AG04450 (cell line): ENCODE measurements at regions of chr3 and their contacts with region 1.

Region 1: GRCh38 chr3:49339945-49340800 is at the start of gene USP4:
- DNase-seq: peak; percentile 66
- H3K4me3 ChIP-seq: peak within 1 kb of the TSS; percentile 68
- H3K27ac ChIP-seq: peak within 1 kb of the TSS; percentile 95
- H3K27me3 ChIP-seq: no peaks in the 10 kb centered on the region
- CTCF ChIP-seq: peak; percentile 61
- polyA plus RNA-seq, gene USP4: 78.4 and 80.4 TPM in 2 replicates

Region 2: GRCh38 chr3:49053543-49053942 is 286.6 kb before region 1 on chr3:
- CTCF ChIA-PET with region 1: no interaction called
- POLR2A ChIA-PET with region 1: no interaction called
- DNase-seq: no peak
- H3K4me3 ChIP-seq: no peak overlapping the region
- H3K27ac ChIP-seq: no peak overlapping the region
- H3K27me3 ChIP-seq: no peaks in the 10 kb centered on the region
- CTCF ChIP-seq: no peak

Region 3: DNA sequence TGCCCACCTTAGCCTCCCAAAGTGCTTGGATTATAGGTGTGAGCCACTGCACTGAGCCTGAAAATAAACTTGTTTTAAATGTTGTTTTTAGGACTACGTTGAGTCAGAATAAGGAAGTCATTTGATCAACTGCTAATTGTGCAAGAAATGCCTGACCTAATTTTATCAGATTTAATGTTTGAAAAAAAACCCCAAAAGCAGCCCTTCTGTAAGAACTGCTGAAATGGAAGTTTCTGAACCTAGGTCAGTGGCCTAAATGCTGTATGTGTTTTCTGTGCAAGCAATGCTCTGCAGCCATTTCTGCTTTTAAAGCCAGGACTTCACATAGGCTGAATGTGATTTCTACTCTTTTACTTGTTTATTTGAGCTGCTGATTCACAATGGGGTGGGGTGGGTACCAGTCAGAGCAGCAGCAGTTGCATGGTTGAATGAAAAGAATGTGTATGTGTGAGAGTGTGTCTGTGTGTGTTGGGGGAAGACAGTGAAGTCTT is 11.4 kb after region 1 on chr3:
- CTCF ChIA-PET with region 1: interaction called, 8 read pairs
- POLR2A ChIA-PET with region 1: interaction called, 21 read pairs
- DNase-seq: peak; percentile 75
- H3K4me3 ChIP-seq: no peak overlapping the region
- H3K27ac ChIP-seq: peak overlapping the region; percentile 87
- H3K27me3 ChIP-seq: no peaks in the 10 kb centered on the region
- CTCF ChIP-seq: no peak

Region 4: DNA sequence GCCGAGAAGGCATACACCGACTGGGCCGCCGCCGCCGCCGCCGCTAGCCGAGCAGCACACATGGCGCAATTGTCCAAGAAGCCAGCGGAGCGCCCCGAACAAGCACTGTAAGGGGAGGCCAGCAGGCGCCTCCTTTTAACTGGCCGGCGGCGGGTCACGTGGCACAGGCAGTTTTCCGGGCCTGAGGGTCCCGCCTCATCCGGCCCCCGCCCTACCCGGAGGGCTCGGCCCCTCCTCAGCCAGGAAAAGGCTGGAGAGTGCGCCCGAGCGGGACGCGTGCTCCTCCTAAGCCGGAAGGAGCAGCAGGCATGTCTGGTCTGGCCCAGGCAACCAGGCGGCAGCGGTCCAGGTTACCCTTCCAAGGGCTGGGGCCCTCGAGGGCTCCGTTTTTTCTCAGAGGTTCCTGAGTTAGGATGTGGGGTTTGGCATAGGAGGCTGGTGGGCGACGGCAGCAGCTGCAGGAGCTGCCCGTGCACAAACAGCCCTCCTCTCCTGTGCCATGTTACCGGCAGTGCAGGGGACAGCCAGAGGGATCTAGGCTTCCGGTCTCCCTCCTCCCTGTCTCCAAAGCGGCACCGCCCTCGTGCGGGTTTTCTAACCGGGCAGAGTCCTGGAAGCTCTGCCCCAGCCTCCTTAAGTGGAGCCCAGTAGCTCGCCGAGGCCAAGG is 18.2 kb after region 1 on chr3 and contains the start of gene GPX1:
- CTCF ChIA-PET with region 1: interaction called, 4 read pairs
- POLR2A ChIA-PET with region 1: interaction called, 21 read pairs
- DNase-seq: peak; percentile 90
- H3K4me3 ChIP-seq: peak within 1 kb of the TSS; percentile 71
- H3K27ac ChIP-seq: peak within 1 kb of the TSS; percentile 93
- H3K27me3 ChIP-seq: no peaks in the 10 kb centered on the region
- CTCF ChIP-seq: no peak
- polyA plus RNA-seq, gene GPX1: 434 and 693 TPM in 2 replicates

Region 5: DNA sequence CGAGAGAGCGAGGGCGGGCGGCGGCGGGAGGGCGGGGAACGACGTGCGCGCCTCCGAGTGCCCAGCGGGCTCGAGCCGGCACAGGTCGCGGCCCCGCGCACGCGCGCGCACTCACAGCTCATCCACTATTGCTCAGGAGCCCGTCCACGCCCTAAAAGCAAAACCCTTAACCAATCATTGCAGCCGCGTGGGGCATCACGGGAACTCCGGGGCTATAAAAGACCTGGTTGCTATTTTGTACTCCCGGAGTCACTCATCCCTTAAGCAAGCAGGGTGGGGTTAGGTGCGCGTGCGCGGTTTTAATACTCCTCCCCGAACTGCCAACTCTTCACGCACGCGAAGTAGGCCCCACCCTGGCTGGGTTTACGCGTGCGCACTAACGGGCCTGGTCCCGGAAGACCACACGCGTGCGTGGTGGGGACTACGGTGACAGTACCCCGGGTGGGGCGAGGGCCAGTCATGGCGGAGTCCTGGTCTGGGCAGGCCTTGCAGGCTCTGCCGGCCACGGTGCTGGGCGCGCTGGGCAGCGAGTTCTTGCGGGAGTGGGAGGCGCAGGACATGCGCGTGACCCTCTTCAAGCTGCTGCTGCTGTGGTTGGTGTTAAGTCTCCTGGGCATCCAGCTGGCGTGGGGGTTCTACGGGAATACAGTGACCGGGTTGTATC is 71.9 kb after region 1 on chr3 and contains the starts of genes RHOA and TCTA:
- CTCF ChIA-PET with region 1: interaction called, 5 read pairs
- POLR2A ChIA-PET with region 1: interaction called, 27 read pairs
- DNase-seq: peak; percentile 100
- H3K4me3 ChIP-seq: peak within 1 kb of the TSS; percentile 97
- H3K27ac ChIP-seq: peak within 1 kb of the TSS; percentile 70
- H3K27me3 ChIP-seq: no peaks in the 10 kb centered on the region
- CTCF ChIP-seq: no peak
- polyA plus RNA-seq, gene RHOA: 466 and 505 TPM in 2 replicates
- polyA plus RNA-seq, gene TCTA: 30.4 and 32.0 TPM in 2 replicates

Region 6: DNA sequence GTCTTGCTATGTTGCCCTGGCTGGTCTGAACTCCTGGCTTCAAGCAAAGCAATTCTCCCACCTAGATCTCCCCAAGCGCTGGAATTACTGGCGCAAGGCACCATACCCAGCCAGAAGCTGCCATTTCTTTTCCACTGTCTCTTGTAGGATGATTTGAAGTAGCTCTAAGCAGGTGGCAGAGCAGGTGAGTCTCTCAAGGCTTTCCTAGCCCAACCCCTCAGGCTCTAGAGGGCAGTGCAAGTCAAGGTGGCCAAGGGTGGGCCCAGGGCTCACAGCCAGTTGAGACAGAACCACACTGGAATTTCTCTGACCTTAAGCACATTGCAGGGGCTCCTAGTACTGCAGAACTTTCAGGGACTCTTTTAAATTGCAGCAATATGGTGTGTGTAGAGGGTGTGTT is 114.3 kb after region 1 on chr3:
- CTCF ChIA-PET with region 1: interaction called, 43 read pairs
- POLR2A ChIA-PET with region 1: interaction called, 10 read pairs
- DNase-seq: no peak
- H3K4me3 ChIP-seq: no peak overlapping the region
- H3K27ac ChIP-seq: no peak overlapping the region
- H3K27me3 ChIP-seq: no peaks in the 10 kb centered on the region
- CTCF ChIP-seq: no peak

Region 7: DNA sequence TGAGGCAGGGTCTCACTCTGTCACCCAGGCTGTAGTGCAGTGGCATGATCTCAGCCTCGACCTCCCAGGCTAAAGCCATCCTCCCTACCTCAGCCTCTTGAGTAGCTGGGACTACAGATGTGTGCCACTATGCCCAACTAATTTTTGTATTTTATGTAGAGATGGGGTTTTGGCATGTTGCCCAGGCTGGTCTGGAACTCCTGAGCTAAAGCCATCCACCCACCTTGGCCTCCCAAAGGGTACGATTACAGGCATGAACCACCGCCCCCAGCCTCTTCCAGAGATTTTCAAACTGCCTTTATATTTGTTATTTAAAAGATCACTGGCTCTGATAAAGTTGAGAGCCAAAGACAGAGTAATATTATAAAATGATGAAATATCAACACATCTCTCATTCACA is 251.4 kb after region 1 on chr3:
- CTCF ChIA-PET with region 1: no interaction called
- POLR2A ChIA-PET with region 1: no interaction called
- DNase-seq: no peak
- H3K4me3 ChIP-seq: no peak overlapping the region
- H3K27ac ChIP-seq: no peak overlapping the region
- H3K27me3 ChIP-seq: peaks cover 3% of the 10 kb centered on the region
- CTCF ChIP-seq: no peak